MCF 10A (cell line): ENCODE measurements at regions of chr10 and their contacts with region 1.

Region 1: DNA sequence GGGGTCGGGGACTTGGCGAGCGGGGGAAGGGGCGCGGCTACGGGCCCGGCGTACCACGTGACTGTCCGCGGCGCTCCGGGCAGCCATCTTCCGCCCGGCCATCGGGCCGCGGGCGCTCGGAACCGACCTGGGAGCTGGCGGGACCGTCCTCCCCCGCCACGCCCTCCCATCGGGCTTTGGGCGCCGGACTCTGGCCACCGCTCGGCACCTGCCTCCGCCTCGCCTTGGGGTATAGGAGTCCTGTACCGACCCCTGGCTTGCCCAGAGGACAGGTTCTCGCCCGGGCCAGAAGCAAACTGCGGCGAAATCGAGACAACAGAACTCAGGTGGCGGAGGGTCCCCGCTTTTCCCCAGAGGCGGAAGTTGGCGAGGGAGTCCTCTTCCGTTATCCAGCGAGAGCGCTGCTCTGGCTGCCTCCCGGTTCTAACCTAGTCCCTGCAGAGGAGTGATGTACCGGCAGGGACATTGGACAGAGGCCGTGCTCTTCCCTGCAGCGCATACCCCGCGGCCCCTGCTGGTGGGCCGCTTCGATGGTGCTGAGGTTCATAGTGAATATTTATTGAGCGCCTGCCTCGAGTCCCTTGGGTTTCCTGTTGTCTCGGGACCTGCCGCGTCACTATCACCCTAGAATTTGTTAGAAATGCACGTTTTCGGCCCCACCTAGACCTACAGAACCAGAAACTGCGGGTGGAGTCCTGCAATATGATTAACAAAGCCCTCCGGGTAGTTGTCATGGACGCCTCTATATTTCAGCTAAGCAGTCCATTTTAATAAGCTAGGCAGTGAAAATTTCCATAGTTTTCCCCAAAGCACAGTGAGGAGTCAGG is 1.3 kb upstream of the SGMS1 start:
- DNase-seq: peak; percentile 65
- H3K4me3 Mint-ChIP-seq: peak overlapping the region; percentile 82
- H3K27ac Mint-ChIP-seq: peak overlapping the region; percentile 96
- H3K4me1 Mint-ChIP-seq: peaks cover 10% of the 10 kb centered on the region
- H3K27me3 Mint-ChIP-seq: no peaks in the 10 kb centered on the region
- CTCF ChIP-seq: peak; percentile 55

Region 2: GRCh38 chr10:50325449-50326171 is 299.5 kb before region 1 on chr10:
- CTCF ChIA-PET with region 1: no interaction called
- POLR2A ChIA-PET with region 1: interaction called, 17 read pairs
- intact Hi-C with region 1: no loop called
- DNase-seq: peak; percentile 93
- H3K4me3 Mint-ChIP-seq: peak overlapping the region; percentile 50
- H3K27ac Mint-ChIP-seq: peak overlapping the region; percentile 10
- H3K4me1 Mint-ChIP-seq: peaks cover 44% of the 10 kb centered on the region
- H3K27me3 Mint-ChIP-seq: no peaks in the 10 kb centered on the region
- CTCF ChIP-seq: no peak

Region 3: DNA sequence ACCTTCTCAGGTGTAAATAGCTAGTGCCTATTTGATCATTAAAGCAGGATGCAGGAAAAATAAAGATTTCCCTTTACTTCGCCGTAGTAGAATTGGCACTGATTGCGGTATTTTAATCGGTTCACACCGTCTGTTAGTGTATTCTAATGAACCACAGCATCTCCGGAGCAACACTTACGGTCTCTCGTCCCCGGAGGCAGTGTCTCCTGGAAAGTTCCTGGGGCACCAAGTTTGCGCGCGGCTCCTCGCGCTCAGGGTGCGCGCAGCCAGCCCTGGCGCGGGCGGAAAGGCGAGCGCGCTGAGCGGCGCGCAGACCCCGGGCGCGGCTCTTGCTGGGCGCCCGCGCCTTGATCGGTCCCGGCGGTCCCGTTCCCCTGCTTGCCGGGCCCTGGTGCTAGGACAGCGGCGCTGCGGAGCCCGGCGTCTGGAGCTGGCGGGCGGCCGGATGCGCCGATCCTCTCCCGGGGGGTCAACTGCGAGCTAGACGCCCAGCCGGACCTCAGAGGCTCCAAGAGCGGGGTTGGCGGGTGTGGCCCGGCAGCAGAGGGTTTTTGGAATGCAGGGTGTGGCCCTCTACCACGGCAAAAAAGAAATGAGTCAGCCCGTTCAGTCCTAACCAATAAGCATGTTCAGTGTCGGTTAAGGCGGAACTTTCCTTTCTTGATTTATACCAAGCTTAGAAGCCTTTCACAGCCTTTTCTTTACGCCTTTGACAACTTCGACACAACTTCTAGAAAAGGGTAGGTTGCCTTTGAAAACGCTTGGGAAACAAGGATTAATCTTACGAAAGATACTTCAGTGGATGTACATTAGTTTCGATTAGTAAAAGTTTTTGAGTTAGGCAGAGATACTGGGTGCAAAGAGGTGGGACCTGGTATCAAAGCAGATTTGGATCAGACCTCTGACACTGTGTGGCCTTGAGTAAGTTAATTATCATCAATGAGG is 206.9 kb before region 1 on chr10:
- CTCF ChIA-PET with region 1: interaction called, 14 read pairs
- POLR2A ChIA-PET with region 1: interaction called, 27 read pairs
- intact Hi-C with region 1: loop called (anchors 2 kb)
- DNase-seq: peak; percentile 91
- H3K4me3 Mint-ChIP-seq: peak overlapping the region; percentile 83
- H3K27ac Mint-ChIP-seq: peak overlapping the region; percentile 91
- H3K4me1 Mint-ChIP-seq: peaks cover 11% of the 10 kb centered on the region
- H3K27me3 Mint-ChIP-seq: no peaks in the 10 kb centered on the region
- CTCF ChIP-seq: no peak

Region 4: DNA sequence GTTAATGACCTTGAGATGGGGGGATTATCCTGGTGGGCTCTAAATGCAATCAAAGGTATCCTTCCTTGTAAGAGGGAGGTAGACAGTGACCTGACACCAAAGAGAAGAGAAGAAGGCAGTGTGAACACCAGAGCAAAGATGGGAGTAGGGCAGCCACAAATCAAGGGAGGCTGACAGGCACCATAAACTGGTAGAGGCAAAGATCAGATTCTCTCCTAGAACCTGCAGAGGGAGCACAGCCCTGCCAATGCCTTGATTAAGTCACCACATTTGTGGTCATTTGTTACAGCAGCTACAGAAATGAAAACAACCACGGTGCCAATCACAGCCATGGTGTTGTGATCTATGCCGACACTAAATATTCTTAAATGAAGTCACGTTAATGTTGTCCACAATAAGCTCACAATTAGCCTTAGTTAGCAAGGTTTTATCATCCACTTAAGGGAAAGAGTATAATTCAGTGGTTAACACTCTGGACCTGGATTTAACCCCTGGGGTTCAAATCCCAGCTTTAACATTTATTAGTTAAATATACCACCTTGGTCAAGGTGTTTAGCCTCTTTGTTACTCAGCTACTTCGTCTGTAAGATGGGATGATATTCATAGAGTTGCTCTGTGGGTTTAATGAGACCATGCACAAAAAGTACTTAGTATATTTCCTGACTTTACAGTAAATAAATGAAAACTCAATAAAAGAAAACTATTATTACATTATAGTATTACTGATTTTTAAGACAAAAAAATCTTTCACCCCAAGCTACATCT is 72.1 kb before region 1 on chr10:
- CTCF ChIA-PET with region 1: interaction called, 15 read pairs
- POLR2A ChIA-PET with region 1: interaction called, 6 read pairs
- intact Hi-C with region 1: loop called (anchors 2 kb)
- DNase-seq: peak; percentile 66
- H3K4me3 Mint-ChIP-seq: no peak overlapping the region
- H3K27ac Mint-ChIP-seq: peak overlapping the region; percentile 14
- H3K4me1 Mint-ChIP-seq: peaks cover 6% of the 10 kb centered on the region
- H3K27me3 Mint-ChIP-seq: no peaks in the 10 kb centered on the region
- CTCF ChIP-seq: peak; percentile 28

Region 5: DNA sequence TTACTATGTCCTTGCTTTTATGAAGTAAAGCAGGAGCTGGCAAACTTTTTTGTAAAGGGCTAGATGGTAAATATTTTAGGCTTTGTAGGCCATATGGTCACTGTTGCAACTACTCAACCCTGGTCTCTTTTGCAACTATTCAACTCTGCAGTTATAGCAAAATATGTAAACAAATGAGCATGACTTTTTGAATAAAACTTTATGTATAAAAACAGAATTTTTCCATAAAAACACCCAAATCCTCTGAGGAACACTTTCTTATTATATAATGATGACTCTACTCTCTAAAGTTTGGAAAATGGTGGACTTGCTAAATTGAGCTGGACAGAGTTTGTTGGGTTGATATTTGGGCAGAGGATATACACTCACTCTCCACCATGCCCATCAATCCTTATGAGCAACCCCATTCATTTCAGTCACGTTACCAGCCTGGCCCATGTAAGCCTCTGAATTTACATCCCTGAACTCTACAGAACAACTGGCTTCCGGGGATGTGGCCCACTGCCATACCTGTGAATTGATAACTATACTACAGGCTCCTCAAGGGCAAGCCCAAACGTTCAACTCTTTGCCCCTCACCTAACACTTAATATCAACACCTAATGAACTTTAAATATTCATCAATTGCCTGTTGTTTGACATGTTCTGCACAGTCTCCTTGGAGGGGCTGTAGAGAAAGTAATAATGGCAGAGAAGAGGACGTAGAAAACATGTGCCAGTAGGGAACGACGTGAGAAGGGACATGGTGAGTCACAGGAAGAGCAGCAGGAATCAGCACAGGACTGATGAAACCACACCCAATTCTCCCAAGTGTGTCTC is 38.9 kb before region 1 on chr10:
- CTCF ChIA-PET with region 1: interaction called, 4 read pairs
- POLR2A ChIA-PET with region 1: interaction called, 17 read pairs
- intact Hi-C with region 1: loop called (anchors 2 kb)
- DNase-seq: peak; percentile 83
- H3K4me3 Mint-ChIP-seq: peak overlapping the region; percentile 0
- H3K27ac Mint-ChIP-seq: peak overlapping the region; percentile 21
- H3K4me1 Mint-ChIP-seq: peaks cover 14% of the 10 kb centered on the region
- H3K27me3 Mint-ChIP-seq: no peaks in the 10 kb centered on the region
- CTCF ChIP-seq: no peak

Region 6: GRCh38 chr10:50614444-50615137 is 10.5 kb before region 1 on chr10:
- CTCF ChIA-PET with region 1: interaction called, 10 read pairs
- POLR2A ChIA-PET with region 1: interaction called, 22 read pairs
- intact Hi-C with region 1: no loop called
- DNase-seq: peak; percentile 62
- H3K4me3 Mint-ChIP-seq: no peak overlapping the region
- H3K27ac Mint-ChIP-seq: no peak overlapping the region
- H3K4me1 Mint-ChIP-seq: peaks cover 10% of the 10 kb centered on the region
- H3K27me3 Mint-ChIP-seq: no peaks in the 10 kb centered on the region
- CTCF ChIP-seq: peak; percentile 28

Region 7: DNA sequence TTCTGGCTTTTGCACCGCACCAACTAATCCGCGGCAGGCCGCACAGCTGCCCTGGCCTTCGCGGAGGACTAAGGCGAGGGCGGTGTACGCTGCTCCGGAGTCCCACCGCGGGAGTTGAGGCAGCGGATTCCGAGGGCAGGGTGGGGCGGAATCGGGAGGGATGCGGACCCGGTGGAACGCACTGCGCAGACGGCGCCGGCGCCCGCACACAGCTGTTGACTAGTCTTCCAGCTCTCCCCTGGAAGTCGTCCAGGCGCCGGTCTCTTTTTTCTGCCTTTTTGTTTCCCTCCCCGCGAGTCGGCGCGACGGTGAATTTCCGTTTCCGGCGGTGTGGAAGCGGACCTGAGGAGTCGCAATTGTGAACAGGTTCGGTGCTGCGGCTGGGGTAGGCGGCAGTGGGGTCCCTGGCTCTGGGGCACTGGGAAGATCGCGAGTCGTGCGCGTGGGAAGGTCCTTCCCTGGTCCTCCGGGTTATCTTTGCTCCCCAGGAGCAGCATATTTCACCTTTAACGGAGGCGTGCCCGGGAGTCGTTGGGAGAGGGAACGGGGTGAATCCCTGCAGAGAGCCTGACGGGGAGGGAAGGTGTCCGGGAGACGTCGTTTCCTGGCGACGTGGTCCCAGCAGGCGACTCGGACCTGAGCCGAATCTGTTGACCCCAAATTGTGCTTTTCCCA is 114.7 kb after region 1 on chr10 and contains the start of gene ASAH2B:
- CTCF ChIA-PET with region 1: interaction called, 3 read pairs
- POLR2A ChIA-PET with region 1: interaction called, 9 read pairs
- intact Hi-C with region 1: loop called (anchors 10 kb)
- DNase-seq: peak; percentile 81
- H3K4me3 Mint-ChIP-seq: peak within 1 kb of the TSS; percentile 97
- H3K27ac Mint-ChIP-seq: peak within 1 kb of the TSS; percentile 97
- H3K4me1 Mint-ChIP-seq: no peaks in the 10 kb centered on the region
- H3K27me3 Mint-ChIP-seq: peaks cover 35% of the 10 kb centered on the region
- CTCF ChIP-seq: no peak
- total RNA-seq, gene ASAH2B: 7.2 TPM in 2 replicates